Activated T-helper 1 cell treated with anti-CD3 and anti-CD28 coated beads, Interleukin-12 subunit alpha, Interleukin-12 subunit beta, Interleukin-2, Interleukin-4 antibody, amounts not matched to agents 30 ng/mL and 10 ng/mL and 1 ng/mL, durations not matched to agents 14 hours and 24 hours and 36 hours (primary cell): ENCODE measurements at regions of chr15 and their contacts with region 1.

Region 1: DNA sequence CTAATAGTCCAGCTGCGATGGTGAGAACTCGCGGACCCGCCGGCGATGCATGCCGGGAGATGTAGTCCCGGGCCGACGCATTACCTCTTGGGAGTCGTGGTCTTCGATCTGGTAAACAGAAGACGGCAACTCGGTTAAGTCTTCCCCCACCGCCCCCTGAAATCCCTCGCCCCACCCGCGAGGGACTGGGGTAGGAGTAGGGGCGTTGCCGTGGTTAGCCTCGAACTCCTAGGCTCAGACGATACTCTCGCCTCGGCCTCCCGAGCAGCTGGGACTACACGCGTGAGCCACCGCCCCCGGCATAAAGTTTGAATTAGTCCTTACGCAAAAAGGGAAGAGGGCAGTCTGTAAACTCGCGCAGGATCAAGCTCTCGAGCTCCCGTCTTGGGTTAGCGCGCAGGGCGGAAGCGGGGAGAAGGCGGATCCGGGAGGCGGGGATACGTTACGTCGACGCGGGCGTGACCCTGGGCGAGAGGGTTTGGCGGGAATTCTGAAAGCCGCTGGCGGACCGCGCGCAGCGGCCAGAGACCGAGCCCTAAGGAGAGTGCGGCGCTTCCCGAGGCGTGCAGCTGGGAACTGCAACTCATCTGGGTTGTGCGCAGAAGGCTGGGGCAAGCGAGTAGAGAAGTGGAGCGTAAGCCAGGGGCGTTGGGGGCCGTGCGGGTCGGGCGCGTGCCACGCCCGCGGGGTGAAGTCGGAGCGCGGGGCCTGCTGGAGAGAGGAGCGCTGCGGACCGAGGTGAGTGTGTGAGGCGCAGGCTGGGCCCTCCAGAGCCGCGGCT is at the start of gene RAD51:
- DNase-seq: peak; percentile 91
- H3K4me3 Mint-ChIP-seq: peak within 1 kb of the TSS; percentile 96
- H3K27ac Mint-ChIP-seq: peak within 1 kb of the TSS; percentile 91
- H3K4me1 Mint-ChIP-seq: peaks cover 41% of the 10 kb centered on the region
- H3K27me3 Mint-ChIP-seq: no peaks in the 10 kb centered on the region
- total RNA-seq, gene RAD51: 62.0 and 62.4 TPM in 2 replicates

Region 2: GRCh38 chr15:40593588-40594428 is 101.1 kb before region 1 on chr15 and contains the start of gene KNL1:
- intact Hi-C with region 1: loop called (anchors 2 kb)
- DNase-seq: peak; percentile 88
- H3K4me3 Mint-ChIP-seq: peak within 1 kb of the TSS; percentile 93
- H3K27ac Mint-ChIP-seq: peak within 1 kb of the TSS; percentile 98
- H3K4me1 Mint-ChIP-seq: peaks cover 45% of the 10 kb centered on the region
- H3K27me3 Mint-ChIP-seq: peaks cover 2% of the 10 kb centered on the region
- total RNA-seq, gene KNL1: 21.6 and 22.4 TPM in 2 replicates

Region 3: GRCh38 chr15:40664909-40665308 is 30.0 kb before region 1 on chr15:
- intact Hi-C with region 1: no loop called
- DNase-seq: no peak
- H3K4me3 Mint-ChIP-seq: no peak overlapping the region
- H3K27ac Mint-ChIP-seq: no peak overlapping the region
- H3K4me1 Mint-ChIP-seq: no peaks in the 10 kb centered on the region
- H3K27me3 Mint-ChIP-seq: no peaks in the 10 kb centered on the region

Region 4: DNA sequence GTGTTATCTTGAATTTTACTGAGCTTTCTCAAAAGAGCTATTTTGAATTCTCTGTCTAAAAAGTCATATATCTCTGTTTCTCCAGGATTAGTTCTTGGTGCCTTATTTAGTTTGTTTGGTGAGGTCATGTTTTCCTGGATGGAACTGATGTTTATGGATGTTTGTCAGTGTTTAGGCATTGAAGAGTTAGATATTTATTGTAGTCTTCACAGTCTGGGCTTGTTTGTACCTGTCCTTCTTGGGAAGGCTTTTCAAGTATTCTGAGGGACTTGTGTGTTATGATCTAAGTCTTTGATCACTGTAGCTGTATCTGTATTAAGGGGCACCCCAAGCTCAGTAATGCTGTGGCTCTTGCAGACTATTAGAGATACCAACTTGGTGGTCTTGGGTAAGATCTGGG is 10.5 kb before region 1 on chr15:
- intact Hi-C with region 1: loop called (anchors 1 kb)
- DNase-seq: no peak
- H3K4me3 Mint-ChIP-seq: no peak overlapping the region
- H3K27ac Mint-ChIP-seq: no peak overlapping the region
- H3K4me1 Mint-ChIP-seq: no peaks in the 10 kb centered on the region
- H3K27me3 Mint-ChIP-seq: no peaks in the 10 kb centered on the region

Region 5: DNA sequence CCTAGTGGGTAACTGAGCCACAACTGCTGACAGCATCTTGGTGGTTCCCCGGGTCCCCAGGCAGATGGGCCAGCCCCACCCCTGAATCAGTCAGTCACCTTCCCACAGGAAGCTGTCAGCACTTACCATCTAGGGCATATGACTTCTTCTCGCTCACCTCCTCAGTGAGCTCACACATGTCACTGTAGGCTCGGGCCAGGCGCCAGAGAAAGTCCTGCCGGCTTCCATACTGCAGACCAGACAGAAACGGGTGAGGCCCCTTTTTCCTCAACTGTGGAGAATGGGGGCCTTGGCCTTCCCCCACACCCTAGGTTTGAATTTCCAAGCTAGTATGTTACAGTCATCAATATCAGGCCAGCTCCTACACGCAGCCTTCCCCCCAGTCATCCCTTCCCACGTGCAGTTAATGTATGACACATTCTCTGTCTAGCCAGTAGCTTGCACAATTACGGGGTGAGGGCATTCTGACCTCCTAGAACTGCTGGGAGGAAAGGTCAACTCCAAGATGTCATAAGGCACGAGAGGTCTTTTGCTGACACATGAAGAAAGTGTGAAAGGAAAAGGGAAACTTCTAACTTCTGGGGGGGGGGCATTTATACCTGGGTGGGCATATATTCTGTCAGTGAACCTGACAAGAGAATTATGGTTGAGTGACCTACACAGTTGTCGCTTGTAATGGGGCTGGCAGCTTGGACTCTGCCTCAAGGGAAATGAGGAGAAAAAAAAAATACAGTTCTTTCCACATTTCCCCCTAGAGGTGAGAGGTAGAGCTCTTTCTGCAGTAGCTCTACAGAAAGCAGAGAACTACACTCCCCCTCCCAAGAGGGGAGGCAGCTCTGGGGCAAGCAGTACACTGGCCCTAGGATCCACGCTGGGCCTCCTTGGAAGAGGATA is 49.3 kb after region 1 on chr15:
- intact Hi-C with region 1: loop called (anchors 1 kb)
- DNase-seq: peak; percentile 70
- H3K4me3 Mint-ChIP-seq: peak overlapping the region; percentile 60
- H3K27ac Mint-ChIP-seq: peak overlapping the region; percentile 95
- H3K4me1 Mint-ChIP-seq: peaks cover 43% of the 10 kb centered on the region
- H3K27me3 Mint-ChIP-seq: no peaks in the 10 kb centered on the region

Region 6: DNA sequence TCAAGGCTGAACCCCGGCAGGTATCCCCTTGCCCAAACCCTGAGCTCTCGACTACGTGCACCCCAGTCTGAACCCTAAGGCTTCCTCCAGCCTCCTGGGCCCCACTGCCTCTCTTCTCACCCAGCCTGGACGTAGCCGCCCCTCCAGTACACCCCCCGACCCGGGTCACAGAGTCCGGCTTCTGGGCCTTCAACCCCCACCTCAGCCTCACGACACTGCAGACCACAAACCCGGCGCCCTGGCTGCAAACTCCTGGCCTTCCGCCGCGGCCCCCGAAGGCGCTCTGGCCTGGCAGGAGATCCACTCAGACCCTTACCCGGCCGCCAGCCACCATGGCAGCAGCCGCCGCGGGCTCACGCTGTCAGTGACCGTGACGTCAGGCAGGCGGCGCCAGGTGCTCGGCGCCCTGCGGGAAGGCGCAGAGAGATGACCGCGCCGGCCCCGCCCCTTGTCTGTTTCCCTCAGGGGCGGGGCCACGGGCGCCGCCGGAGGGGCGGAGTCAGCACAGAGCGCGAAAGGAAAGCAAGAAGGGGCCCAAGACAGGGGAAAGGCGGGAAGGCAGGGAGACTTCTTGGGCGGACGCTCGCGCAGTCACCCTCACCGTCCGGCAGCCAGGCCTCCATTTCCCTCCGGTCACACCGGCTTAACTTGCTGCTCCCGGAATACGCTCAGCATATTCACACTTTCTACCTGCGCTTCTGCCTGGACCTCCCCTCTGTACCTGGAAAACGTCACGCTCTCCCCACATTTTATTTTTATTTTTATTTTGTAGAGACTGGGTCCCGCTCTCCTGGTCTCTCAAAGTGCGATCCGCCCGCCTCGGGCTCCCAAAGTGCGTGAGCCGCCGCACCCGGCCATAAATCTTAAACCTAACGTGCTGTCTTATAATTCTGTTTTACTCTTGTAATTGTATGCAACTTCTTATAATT is 60.3 kb after region 1 on chr15 and contains the start of gene RMDN3:
- intact Hi-C with region 1: loop called (anchors 1 kb)
- DNase-seq: peak; percentile 94
- H3K4me3 Mint-ChIP-seq: peak within 1 kb of the TSS; percentile 91
- H3K27ac Mint-ChIP-seq: peak within 1 kb of the TSS; percentile 97
- H3K4me1 Mint-ChIP-seq: peaks cover 38% of the 10 kb centered on the region
- H3K27me3 Mint-ChIP-seq: no peaks in the 10 kb centered on the region
- total RNA-seq, gene RMDN3: 39.0 and 42.2 TPM in 2 replicates

Region 7: GRCh38 chr15:40763801-40764732 is 69.2 kb after region 1 on chr15 and contains the start of gene GCHFR:
- intact Hi-C with region 1: loop called (anchors 1 kb)
- DNase-seq: peak; percentile 73
- H3K4me3 Mint-ChIP-seq: peak within 1 kb of the TSS; percentile 81
- H3K27ac Mint-ChIP-seq: peak within 1 kb of the TSS; percentile 87
- H3K4me1 Mint-ChIP-seq: peaks cover 21% of the 10 kb centered on the region
- H3K27me3 Mint-ChIP-seq: peaks cover 2% of the 10 kb centered on the region
- total RNA-seq, gene GCHFR: 31.3 and 35.7 TPM in 2 replicates

Region 8: DNA sequence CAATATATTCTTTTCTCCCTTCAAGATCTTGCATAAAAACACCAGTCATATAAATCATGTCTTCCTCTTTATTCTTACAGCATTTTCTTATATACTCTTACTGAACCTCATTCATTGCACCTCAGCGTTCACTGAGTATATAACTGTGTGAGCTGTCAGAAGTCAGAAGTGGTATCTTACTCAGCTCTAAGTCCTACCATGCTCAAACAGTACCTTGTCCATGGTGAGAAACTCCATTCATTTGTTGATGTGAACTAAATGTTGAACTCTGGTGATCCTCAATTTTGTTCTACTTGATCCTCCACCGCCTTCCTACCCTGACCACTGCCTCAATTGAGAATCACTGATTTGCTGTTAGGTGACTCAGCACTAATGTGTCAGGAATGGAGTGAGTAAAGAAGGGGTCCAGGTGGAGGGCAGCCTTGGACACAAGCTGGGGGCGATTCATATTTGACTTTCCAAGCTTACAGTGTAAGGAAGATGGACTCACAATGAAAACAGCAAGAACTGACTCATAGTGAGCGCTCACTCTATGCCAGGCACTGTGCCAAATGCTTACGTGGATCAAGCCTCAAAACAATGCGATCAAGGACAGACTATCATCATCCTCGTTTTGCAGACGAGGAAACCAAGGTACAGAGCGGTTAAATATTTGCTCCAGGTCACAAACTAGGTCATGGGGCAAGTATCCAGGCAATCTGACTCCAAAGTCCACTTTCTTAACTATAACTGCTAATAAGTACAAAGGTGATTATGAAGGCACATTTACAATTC is 98.5 kb after region 1 on chr15:
- intact Hi-C with region 1: no loop called
- DNase-seq: no peak
- H3K4me3 Mint-ChIP-seq: no peak overlapping the region
- H3K27ac Mint-ChIP-seq: no peak overlapping the region
- H3K4me1 Mint-ChIP-seq: peaks cover 15% of the 10 kb centered on the region
- H3K27me3 Mint-ChIP-seq: no peaks in the 10 kb centered on the region